MCF 10A (cell line): ENCODE measurements at regions of chr13 and their contacts with region 1.

Region 1: GRCh38 chr13:73058736-73059459 is at the start of gene KLF5:
- DNase-seq: peak; percentile 99
- H3K4me3 Mint-ChIP-seq: peak within 1 kb of the TSS; percentile 83
- H3K27ac Mint-ChIP-seq: peak within 1 kb of the TSS; percentile 92
- H3K4me1 Mint-ChIP-seq: peaks cover 34% of the 10 kb centered on the region
- H3K27me3 Mint-ChIP-seq: no peaks in the 10 kb centered on the region
- CTCF ChIP-seq: no peak
- total RNA-seq, gene KLF5: 197 and 226 TPM in 2 replicates

Region 2: DNA sequence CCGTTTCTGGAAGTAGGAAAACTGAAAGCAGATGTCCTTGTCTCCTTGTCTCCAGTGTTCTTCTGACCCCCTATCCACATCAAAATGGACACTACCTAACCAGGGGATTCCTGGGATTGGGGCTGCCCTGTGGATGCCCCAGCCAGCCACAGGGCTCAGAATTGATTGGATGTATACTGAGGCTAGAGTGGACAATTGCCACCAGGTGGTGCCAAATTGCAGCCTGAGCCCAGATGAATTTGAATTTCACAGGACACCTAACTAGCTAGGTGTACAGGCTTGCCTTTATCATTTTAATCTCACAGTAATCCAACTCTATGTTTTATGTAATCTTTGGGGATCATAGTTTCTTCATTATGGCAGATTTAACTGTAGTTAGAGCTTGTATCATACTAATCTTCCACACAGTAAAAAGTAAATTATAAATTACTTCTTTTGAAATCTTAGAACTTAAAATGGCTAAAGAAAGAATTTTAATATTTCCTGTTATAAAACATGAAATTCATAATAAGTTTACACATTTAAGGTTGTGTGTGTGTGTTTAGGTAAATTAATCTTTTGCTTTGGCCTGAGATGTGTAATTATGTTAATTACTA is 219.0 kb before region 1 on chr13:
- CTCF ChIA-PET with region 1: interaction called, 11 read pairs
- POLR2A ChIA-PET with region 1: interaction called, 54 read pairs
- intact Hi-C with region 1: loop called (anchors 1 kb)
- DNase-seq: peak; percentile 80
- H3K4me3 Mint-ChIP-seq: no peak overlapping the region
- H3K27ac Mint-ChIP-seq: no peak overlapping the region
- H3K4me1 Mint-ChIP-seq: peaks cover 5% of the 10 kb centered on the region
- H3K27me3 Mint-ChIP-seq: no peaks in the 10 kb centered on the region
- CTCF ChIP-seq: peak; percentile 84

Region 3: DNA sequence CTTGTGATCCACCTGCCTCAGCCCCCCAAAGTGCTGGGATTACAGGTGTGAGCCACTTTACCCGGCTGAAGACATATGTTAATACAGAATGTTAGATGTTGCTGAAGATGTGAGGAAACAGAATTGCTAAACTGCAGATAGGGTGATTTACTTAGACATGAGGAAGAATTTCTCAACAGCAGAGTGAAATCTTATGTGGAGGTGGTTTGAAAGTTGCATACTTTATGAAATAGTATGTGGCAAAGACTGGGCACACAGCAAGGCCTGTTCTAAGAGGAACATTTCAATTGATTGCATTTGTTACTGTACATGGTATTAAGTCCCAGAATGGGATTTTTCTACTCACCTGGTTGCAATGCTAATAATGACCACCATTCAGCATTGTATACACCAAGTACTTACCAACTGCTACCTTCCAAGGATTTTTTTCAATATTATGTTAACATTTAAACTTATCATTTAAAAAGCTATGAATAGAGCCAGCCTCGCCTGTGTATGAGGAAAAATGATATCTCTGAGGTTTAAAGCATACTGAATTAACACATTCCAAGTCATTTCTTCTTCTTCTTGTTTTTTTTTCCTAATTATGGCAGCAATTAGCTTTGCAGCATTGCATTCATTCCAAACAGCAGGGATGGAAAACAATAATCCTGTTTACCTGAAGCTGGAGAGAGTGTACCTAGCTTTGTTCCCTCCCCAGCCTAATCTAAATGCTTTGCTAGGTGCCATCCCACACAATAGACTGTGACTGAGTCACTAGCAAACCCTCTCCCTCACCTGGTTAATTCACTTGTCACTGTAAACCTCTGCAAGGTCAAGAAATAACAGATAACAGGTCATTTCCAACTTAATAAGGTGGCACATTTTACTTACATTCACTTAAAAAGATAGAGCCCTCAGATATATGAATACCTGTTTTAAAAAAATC is 19.5 kb before region 1 on chr13:
- CTCF ChIA-PET with region 1: interaction called, 4 read pairs
- POLR2A ChIA-PET with region 1: interaction called, 19 read pairs
- intact Hi-C with region 1: no loop called
- DNase-seq: no peak
- H3K4me3 Mint-ChIP-seq: no peak overlapping the region
- H3K27ac Mint-ChIP-seq: peak overlapping the region; percentile 68
- H3K4me1 Mint-ChIP-seq: peaks cover 4% of the 10 kb centered on the region
- H3K27me3 Mint-ChIP-seq: no peaks in the 10 kb centered on the region
- CTCF ChIP-seq: no peak

Region 4: GRCh38 chr13:73248711-73249578 is 190.0 kb after region 1 on chr13:
- CTCF ChIA-PET with region 1: interaction called, 3 read pairs
- POLR2A ChIA-PET with region 1: interaction called, 34 read pairs
- intact Hi-C with region 1: no loop called
- DNase-seq: peak; percentile 92
- H3K4me3 Mint-ChIP-seq: peak overlapping the region; percentile 34
- H3K27ac Mint-ChIP-seq: peak overlapping the region; percentile 85
- H3K4me1 Mint-ChIP-seq: peaks cover 28% of the 10 kb centered on the region
- H3K27me3 Mint-ChIP-seq: no peaks in the 10 kb centered on the region
- CTCF ChIP-seq: no peak

Region 5: DNA sequence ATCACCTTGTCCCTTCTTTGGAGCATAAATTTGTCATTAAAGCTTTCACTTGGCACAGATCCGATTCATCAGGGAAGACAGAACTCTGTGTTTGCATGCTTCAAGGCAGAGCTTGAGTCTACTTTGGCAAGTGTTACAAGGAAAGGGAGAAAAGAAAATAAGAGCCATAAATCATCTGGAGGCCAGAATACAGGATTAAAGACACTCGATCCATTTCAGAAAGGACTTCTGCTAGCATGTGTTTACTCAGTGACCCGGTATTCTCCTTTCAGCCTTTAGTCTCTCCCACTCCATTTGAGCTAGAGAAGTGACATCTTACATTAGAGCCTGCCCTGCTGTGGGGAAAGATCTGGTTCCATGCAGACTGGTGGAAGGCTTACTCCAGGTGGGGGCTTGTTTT is 306.3 kb after region 1 on chr13:
- CTCF ChIA-PET with region 1: interaction called, 7 read pairs
- POLR2A ChIA-PET with region 1: interaction called, 292 read pairs
- intact Hi-C with region 1: no loop called
- DNase-seq: no peak
- H3K4me3 Mint-ChIP-seq: peak overlapping the region; percentile 15
- H3K27ac Mint-ChIP-seq: no peak overlapping the region
- H3K4me1 Mint-ChIP-seq: peaks cover 21% of the 10 kb centered on the region
- H3K27me3 Mint-ChIP-seq: no peaks in the 10 kb centered on the region
- CTCF ChIP-seq: no peak

Region 6: DNA sequence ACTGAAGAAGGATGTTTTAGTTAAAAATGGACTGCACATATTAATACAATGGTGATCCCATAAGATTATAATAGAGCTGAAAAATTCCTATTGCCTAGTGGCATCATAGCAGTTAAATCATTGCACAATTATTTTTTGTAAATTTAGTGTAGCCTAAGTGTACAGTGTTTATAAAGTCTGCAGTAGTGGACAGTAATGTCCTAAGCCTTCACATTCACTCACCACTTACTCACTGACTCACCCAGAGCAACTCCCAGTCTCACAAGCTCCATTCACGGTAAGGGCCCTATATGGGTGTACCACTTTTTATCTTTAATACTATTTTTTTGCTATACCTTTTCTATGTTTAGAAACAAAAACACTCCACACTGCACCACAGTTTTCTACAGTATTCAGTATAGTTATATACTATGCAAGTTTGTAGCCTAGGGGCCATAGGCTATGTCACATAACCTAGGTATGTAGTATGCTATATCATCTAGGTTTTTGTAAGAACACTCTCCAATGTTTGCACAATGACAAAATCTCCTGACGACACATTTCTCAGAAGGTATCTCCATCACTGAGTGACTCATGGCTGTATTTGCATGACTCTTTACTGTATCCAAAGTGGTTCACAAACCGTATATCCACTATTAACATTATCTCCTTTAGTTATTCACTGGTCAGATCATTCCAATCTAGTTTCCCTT is 539.3 kb after region 1 on chr13:
- CTCF ChIA-PET with region 1: no interaction called
- POLR2A ChIA-PET with region 1: interaction called, 3 read pairs
- intact Hi-C with region 1: loop called (anchors 5 kb)
- DNase-seq: peak; percentile 86
- H3K4me3 Mint-ChIP-seq: no peak overlapping the region
- H3K27ac Mint-ChIP-seq: peak overlapping the region; percentile 92
- H3K4me1 Mint-ChIP-seq: peaks cover 33% of the 10 kb centered on the region
- H3K27me3 Mint-ChIP-seq: no peaks in the 10 kb centered on the region
- CTCF ChIP-seq: no peak